ENCODE measurements at regions of chr19 and their contacts with region 1.

Region 1: DNA sequence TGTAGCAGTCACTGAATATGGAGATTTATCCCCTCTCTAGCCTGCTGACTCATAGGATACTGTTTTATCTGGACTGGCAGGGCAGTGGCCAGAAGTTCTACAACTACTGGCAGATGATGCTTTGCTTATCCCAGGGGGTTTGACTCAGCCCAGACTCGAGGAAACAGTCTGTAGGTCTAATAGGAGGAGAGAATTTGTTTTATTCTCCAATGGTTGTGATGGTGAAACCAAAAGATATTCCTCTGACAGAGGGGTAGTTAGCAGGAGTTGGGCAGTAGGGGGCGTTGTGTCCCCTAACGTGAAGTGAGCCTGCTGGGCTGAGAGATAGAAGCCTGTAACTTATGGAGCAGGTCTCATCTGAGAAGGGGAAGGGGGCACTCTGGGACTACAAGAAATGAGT is 74.9 kb downstream of the WTIP start:
- DNase-seq: no peak
- ATAC-seq: peak; percentile 77 to 86

Region 2: GRCh38 chr19:34260771-34261173 is 295.7 kb before region 1 on chr19:
- intact Hi-C with region 1: no loop called
- DNase-seq: no peak
- ATAC-seq: peak; percentile 34 to 57

Region 3: DNA sequence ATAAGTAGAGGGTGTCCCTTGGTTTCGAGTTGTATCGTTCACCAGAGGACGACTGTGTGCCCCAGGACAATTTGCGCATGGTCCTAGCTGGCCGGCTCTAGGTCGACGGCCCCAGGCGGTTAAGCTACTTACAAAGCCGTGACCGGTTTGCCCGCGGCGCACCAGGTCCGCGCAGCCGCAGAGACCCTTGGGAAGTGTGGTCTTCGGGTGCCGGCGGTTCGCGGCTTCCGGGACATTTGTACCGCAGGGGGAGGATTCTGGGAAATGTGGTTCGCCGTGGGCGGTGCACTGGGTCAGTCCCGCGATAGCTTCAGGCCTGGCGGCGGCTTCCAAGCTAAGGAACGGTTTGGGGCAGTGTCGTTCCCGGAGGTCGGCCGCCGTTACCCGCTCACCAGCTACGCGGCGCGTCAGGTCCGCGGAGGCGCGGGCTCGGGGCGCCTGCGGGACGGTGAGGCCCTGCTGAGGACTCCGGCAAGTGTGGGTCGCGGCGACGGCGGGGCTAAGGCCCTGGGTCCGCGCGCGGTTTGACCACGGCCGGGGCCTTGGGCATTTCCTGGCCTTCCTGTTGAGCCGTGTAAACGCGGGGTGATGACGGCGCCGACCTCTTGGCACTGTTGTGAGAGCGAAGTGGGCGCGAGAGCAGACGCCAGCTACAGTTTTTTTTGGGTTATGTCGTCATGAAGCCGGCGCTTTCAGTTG is 121.0 kb after region 1 on chr19 and contains the start of gene ZNF302:
- intact Hi-C with region 1: loop called in 1 of 2 experiments (anchors 10 kb)
- DNase-seq: peak; percentile 98
- ATAC-seq: peak; percentile 99
- total RNA-seq, gene ZNF302: 25.3 to 30.7 TPM

Measured in left cardiac atrium (tissue), 4 donors.